GM13977 (cell line): ENCODE measurements at regions of chr11 and their contacts with region 1.

Region 1: GRCh38 chr11:111378861-111379601 is at the start of gene POU2AF1:
- DNase-seq: peak; percentile 71
- CTCF ChIP-seq: no peak

Region 2: DNA sequence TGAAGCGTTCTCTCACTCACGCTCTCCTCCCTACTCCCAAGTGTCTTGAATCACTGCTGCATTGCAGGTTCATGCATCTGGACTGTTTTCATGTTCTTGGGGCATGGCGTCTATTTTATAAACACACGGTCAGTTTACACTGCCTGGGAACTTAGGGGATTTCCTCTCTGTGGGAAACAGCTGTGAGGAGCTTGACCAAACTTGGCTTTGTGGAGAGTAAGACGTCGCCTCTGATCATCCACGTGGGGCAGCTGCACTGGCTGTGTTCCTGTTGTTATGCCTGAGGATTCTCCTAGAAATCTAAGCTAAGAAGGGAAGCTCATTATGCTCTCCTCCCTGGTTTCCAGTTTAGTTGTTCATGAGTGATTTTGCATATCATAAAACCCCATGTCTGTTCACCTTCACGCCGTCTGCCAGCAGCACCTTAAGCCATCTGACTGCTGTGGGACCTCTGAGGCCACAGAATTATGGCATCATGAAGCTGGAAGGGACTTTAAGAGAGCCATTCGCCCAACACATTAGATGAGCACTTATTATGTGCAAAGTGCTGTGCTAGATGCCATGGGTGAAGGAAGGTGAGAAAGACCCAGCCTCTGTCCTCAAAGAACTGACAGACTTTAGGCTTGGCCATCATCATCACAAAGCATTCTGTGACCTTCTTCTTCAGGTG is 38.9 kb after region 1 on chr11:
- in situ Hi-C with region 1: loop called (anchors 5 kb)
- DNase-seq: no peak
- CTCF ChIP-seq: no peak